MCF 10A (cell line): ENCODE measurements at regions of chr11 and their contacts with region 1.

Region 1: GRCh38 chr11:95231127-95231880 is at the start of gene SESN3:
- DNase-seq: peak; percentile 97
- H3K4me3 Mint-ChIP-seq: no peak within 1 kb of the TSS
- H3K27ac Mint-ChIP-seq: peak within 1 kb of the TSS; percentile 23
- H3K4me1 Mint-ChIP-seq: peaks cover 19% of the 10 kb centered on the region
- H3K27me3 Mint-ChIP-seq: no peaks in the 10 kb centered on the region
- CTCF ChIP-seq: no peak
- total RNA-seq, gene SESN3: 3.0 and 6.3 TPM in 2 replicates

Region 2: DNA sequence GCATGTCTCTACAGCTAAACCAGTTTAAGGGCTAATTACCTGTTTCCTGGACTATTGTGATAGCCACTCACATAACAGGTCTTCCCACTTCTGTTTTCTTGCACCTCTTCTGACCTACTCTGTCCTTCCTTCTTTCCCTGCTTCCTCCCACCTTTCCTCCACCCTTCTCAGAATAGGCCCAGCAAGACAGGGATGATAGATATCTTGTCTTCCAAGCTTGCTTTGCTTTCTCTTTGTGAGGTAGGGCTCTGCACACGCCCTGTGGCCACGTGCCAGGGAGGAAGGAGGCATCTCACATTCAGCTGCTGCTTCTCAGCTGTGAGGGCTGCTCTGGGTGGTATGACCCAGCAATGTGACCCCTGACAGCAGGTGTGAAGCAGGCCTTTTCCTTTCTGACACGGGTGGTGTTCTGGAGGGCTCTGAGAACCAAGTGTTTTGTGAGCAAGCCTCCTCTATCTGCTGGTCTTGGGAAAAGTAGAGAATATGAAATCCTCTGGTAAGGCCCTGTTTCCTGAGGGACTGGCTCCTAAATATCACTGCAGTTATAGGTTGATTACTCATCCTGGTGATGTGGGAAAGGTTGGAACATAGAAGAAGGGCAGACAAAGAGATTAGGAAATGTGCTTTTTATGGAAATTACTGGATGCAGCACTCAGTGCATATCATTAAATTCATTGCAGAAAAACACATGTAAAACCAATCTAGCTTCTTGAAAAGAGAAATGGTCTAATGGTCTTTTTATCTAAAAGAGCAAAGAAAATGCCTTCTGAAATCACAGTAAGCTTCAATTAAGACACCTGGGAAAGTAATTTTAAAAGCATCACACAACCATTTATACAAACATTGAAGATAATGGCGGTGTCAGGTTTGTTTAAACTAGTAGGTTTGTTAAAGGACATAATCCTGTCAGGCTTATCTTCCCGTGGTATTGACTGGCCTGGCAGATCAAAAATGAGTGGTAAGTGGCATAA is 454.7 kb before region 1 on chr11:
- CTCF ChIA-PET with region 1: no interaction called
- POLR2A ChIA-PET with region 1: no interaction called
- intact Hi-C with region 1: no loop called
- DNase-seq: peak; percentile 67
- H3K4me3 Mint-ChIP-seq: no peak overlapping the region
- H3K27ac Mint-ChIP-seq: peak overlapping the region; percentile 78
- H3K4me1 Mint-ChIP-seq: peaks cover 35% of the 10 kb centered on the region
- H3K27me3 Mint-ChIP-seq: no peaks in the 10 kb centered on the region
- CTCF ChIP-seq: no peak

Region 3: DNA sequence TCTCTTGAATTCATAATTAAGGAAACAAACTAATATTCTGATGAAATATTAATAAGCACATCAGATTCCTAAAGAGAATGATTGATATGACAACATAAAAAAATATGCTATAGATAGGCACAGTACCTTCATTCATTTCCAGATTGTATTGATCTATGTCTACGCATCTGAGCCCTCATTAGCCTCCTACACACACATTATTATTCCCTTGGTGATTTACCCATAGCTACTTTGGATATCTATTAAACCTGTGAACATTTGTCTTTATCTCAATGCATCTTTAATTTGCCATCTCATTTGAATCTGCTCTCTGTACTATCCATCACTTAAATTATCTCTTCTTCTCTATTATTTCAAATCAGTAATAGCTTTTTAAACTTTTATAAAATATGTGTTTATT is 18.7 kb before region 1 on chr11:
- CTCF ChIA-PET with region 1: no interaction called
- POLR2A ChIA-PET with region 1: interaction called, 16 read pairs
- intact Hi-C with region 1: no loop called
- DNase-seq: no peak
- H3K4me3 Mint-ChIP-seq: no peak overlapping the region
- H3K27ac Mint-ChIP-seq: no peak overlapping the region
- H3K4me1 Mint-ChIP-seq: no peaks in the 10 kb centered on the region
- H3K27me3 Mint-ChIP-seq: no peaks in the 10 kb centered on the region
- CTCF ChIP-seq: no peak

Region 4: GRCh38 chr11:95254131-95254704 is 22.9 kb after region 1 on chr11:
- CTCF ChIA-PET with region 1: interaction called, 3 read pairs
- POLR2A ChIA-PET with region 1: interaction called, 12 read pairs
- intact Hi-C with region 1: no loop called
- DNase-seq: peak; percentile 64
- H3K4me3 Mint-ChIP-seq: no peak overlapping the region
- H3K27ac Mint-ChIP-seq: no peak overlapping the region
- H3K4me1 Mint-ChIP-seq: peaks cover 5% of the 10 kb centered on the region
- H3K27me3 Mint-ChIP-seq: no peaks in the 10 kb centered on the region
- CTCF ChIP-seq: no peak

Region 5: GRCh38 chr11:95512682-95513081 is 281.4 kb after region 1 on chr11:
- CTCF ChIA-PET with region 1: no interaction called
- POLR2A ChIA-PET with region 1: interaction called, 15 read pairs
- intact Hi-C with region 1: no loop called
- DNase-seq: peak; percentile 86
- H3K4me3 Mint-ChIP-seq: peak overlapping the region; percentile 7
- H3K27ac Mint-ChIP-seq: peak overlapping the region; percentile 71
- H3K4me1 Mint-ChIP-seq: peaks cover 41% of the 10 kb centered on the region
- H3K27me3 Mint-ChIP-seq: no peaks in the 10 kb centered on the region
- CTCF ChIP-seq: no peak

Region 6: DNA sequence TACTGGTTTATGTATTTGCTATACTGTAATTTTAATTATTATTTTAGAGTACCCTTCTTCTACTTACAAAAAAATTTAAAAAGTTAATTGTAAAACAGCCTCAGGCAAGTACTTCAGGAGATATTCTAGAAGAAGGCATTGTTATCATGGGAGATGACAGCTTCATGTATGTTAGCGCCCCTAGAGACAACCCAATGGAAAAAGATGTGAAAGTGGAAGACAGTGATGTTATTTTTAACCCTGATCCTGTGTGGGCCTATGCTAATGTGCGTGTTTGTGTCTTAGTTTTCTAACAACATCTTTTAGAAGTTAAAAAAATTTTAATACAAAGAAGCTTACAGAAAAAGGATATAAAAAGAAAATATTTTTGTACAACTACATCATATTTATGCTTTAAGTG is 353.3 kb after region 1 on chr11:
- CTCF ChIA-PET with region 1: no interaction called
- POLR2A ChIA-PET with region 1: interaction called, 4 read pairs
- intact Hi-C with region 1: loop called (anchors 5 kb)
- DNase-seq: no peak
- H3K4me3 Mint-ChIP-seq: no peak overlapping the region
- H3K27ac Mint-ChIP-seq: peak overlapping the region; percentile 50
- H3K4me1 Mint-ChIP-seq: peaks cover 11% of the 10 kb centered on the region
- H3K27me3 Mint-ChIP-seq: no peaks in the 10 kb centered on the region
- CTCF ChIP-seq: no peak

Region 7: GRCh38 chr11:95764267-95764898 is 533.1 kb after region 1 on chr11:
- CTCF ChIA-PET with region 1: interaction called, 10 read pairs
- POLR2A ChIA-PET with region 1: no interaction called
- intact Hi-C with region 1: no loop called
- DNase-seq: peak; percentile 54
- H3K4me3 Mint-ChIP-seq: no peak overlapping the region
- H3K27ac Mint-ChIP-seq: no peak overlapping the region
- H3K4me1 Mint-ChIP-seq: peaks cover 10% of the 10 kb centered on the region
- H3K27me3 Mint-ChIP-seq: no peaks in the 10 kb centered on the region
- CTCF ChIP-seq: peak; percentile 61